CD4-positive, alpha-beta memory T cell (primary cell): ENCODE measurements at regions of chr1 and their contacts with region 1.

Region 1: GRCh38 chr1:83931658-83932253 is 67.2 kb downstream of the TTLL7 start:
- DNase-seq: peak in 4 of 5 donors; percentile 36 to 47 (median 44)
- H3K4me3 ChIP-seq: no peak overlapping the region
- H3K4me3 Mint-ChIP-seq: no peak overlapping the region
- H3K27ac ChIP-seq: no peak overlapping the region
- H3K27ac Mint-ChIP-seq: no peak overlapping the region
- H3K4me1 ChIP-seq: no peaks in the 10 kb centered on the region
- H3K4me1 Mint-ChIP-seq: no peaks in the 10 kb centered on the region
- H3K27me3 ChIP-seq: no peaks in the 10 kb centered on the region
- H3K27me3 Mint-ChIP-seq: peaks cover 4 to 5% of the 10 kb centered on the region in 2 donors

Region 2: GRCh38 chr1:84122780-84123382 is 191.1 kb after region 1 on chr1:
- CTCF ChIA-PET with region 1: interaction called, 25 read pairs
- POLR2A ChIA-PET with region 1: no interaction called
- intact Hi-C with region 1: loop called (anchors 1 kb)
- DNase-seq: peak; percentile 33 to 47 (median 42)
- H3K4me3 ChIP-seq: no peak overlapping the region
- H3K4me3 Mint-ChIP-seq: no peak overlapping the region
- H3K27ac ChIP-seq: no peak overlapping the region
- H3K27ac Mint-ChIP-seq: no peak overlapping the region
- H3K4me1 ChIP-seq: no peaks in the 10 kb centered on the region
- H3K4me1 Mint-ChIP-seq: no peaks in the 10 kb centered on the region
- H3K27me3 ChIP-seq: no peaks in the 10 kb centered on the region
- H3K27me3 Mint-ChIP-seq: no peaks in the 10 kb centered on the region

Region 3: GRCh38 chr1:84936116-84936810 is 1004.5 kb after region 1 on chr1:
- CTCF ChIA-PET with region 1: no interaction called
- POLR2A ChIA-PET with region 1: no interaction called
- intact Hi-C with region 1: loop called (anchors 5 kb)
- DNase-seq: peak in 4 of 5 donors; percentile 52 to 62 (median 60)
- H3K4me3 ChIP-seq: no peak overlapping the region
- H3K4me3 Mint-ChIP-seq: no peak overlapping the region
- H3K27ac ChIP-seq: no peak overlapping the region
- H3K27ac Mint-ChIP-seq: no peak overlapping the region
- H3K4me1 ChIP-seq: peaks cover 3% of the 10 kb centered on the region
- H3K4me1 Mint-ChIP-seq: peaks cover 0 to 5% (median 2%) of the 10 kb centered on the region in 4 donors
- H3K27me3 ChIP-seq: no peaks in the 10 kb centered on the region
- H3K27me3 Mint-ChIP-seq: no peaks in the 10 kb centered on the region